ENCODE measurements at regions of chr3 and their contacts with region 1.

Region 1: DNA sequence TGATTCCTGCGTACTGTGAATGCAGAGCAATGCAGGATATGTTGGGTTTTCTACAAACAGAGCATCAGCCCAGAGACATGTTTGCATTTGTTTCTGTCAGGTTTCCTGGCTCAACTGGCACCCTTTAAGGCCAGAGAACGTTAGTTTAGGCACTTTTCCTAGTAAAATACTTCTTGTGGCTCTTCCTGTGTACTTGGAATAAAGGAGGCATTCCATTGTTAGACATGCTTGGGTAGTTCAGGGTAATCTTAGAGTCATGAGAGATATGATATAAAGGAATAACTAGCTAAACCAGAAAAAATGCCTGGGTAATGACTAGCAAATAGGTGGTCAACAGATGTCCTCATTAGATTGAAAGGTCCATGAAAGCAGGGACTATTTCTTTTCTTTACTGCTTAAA is 60.4 kb upstream of the RBM5 start:
- DNase-seq: no peak
- ATAC-seq: no peak
- H3K4me3 ChIP-seq: no peak overlapping the region
- H3K4me3 Mint-ChIP-seq: no peak overlapping the region
- H3K27ac ChIP-seq: no peak overlapping the region
- H3K27ac Mint-ChIP-seq: no peak overlapping the region
- H3K4me1 ChIP-seq: no peaks in the 10 kb centered on the region
- H3K4me1 Mint-ChIP-seq: peaks cover 2 to 12% (median 4%) of the 10 kb centered on the region in 3 donors
- H3K27me3 ChIP-seq: no peaks in the 10 kb centered on the region
- H3K27me3 Mint-ChIP-seq: no peaks in the 10 kb centered on the region

Region 2: GRCh38 chr3:49786241-49786958 is 241.9 kb before region 1 on chr3 and contains the start of gene IP6K1:
- CTCF ChIA-PET with region 1: interaction called in 1 of 2 experiments, 10 read pairs
- POLR2A ChIA-PET with region 1: no interaction called
- DNase-seq: peak; percentile 97 to 100 (median 100)
- ATAC-seq: peak; percentile 99 to 100 (median 100)
- H3K4me3 ChIP-seq: peak within 1 kb of the TSS; percentile 60 to 72
- H3K4me3 Mint-ChIP-seq: peak within 1 kb of the TSS; percentile 90 to 93 (median 91)
- H3K27ac ChIP-seq: peak within 1 kb of the TSS; percentile 93
- H3K27ac Mint-ChIP-seq: peak within 1 kb of the TSS; percentile 94 to 98
- H3K4me1 ChIP-seq: peaks cover 11 to 61% of the 10 kb centered on the region in 2 experiments
- H3K4me1 Mint-ChIP-seq: peaks cover 32 to 40% (median 34%) of the 10 kb centered on the region in 3 donors
- H3K27me3 ChIP-seq: peaks cover 0 to 7% of the 10 kb centered on the region in 2 experiments
- H3K27me3 Mint-ChIP-seq: no peaks in the 10 kb centered on the region
- total RNA-seq, gene IP6K1: 31.6 to 62.2 (median 57.0) TPM

Region 3: GRCh38 chr3:50008931-50009330 is 19.4 kb before region 1 on chr3:
- CTCF ChIA-PET with region 1: no interaction called
- POLR2A ChIA-PET with region 1: interaction called in 1 of 2 experiments, 10 read pairs
- DNase-seq: no peak
- ATAC-seq: no peak
- H3K4me3 ChIP-seq: no peak overlapping the region
- H3K4me3 Mint-ChIP-seq: no peak overlapping the region
- H3K27ac ChIP-seq: no peak overlapping the region
- H3K27ac Mint-ChIP-seq: peak overlapping the region in 1 of 2 donors; percentile 13
- H3K4me1 ChIP-seq: no peaks in the 10 kb centered on the region
- H3K4me1 Mint-ChIP-seq: peaks cover 0 to 2% (median under 1%) of the 10 kb centered on the region in 3 donors
- H3K27me3 ChIP-seq: no peaks in the 10 kb centered on the region
- H3K27me3 Mint-ChIP-seq: no peaks in the 10 kb centered on the region